ENCODE measurements at regions of chr1 and their contacts with region 1.

Region 1: DNA sequence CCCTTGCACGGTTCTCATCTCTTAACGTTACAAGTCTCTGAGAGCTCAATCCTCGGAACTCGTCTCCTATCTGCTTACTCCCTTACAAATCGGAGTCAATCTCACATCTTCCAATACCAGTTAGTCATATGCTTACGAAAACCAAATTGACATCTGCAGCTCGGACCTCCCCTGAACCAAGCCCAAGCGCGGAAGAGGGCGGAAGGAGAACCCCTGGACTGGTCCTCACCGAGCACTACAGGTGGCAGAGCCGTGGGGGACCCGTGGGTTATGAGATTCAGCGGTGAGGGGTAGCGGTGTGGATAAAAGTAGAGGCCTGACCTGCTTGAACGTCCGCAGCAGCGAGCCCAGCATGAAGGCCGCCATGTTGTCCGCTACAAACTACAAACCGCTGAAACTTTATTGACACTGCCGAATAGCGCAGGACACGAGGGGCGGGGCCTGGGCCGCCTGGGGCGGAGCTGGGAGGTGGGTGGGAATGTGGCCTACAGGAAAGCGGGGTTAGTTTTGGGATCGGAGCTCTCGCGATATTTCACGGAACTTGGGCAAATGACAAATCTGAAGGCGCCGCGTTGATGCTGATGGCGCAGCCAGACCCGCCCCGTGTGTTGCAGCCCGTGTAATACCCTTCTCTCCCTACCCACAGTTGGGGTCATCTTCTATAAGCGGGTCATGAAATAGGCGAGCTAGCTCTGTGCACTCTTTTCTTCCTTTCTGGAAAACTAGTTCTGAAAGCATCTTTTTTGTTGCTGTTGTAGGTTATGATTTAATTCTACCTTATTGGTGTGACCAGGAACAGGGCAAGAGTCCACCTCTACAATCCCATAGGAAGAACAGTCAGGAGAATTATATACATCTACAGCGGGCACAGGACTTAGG is at the start of gene MRPS14:
- DNase-seq: peak; percentile 97 to 100 (median 98)
- ATAC-seq: peak; percentile 97
- H3K4me3 ChIP-seq: peak within 1 kb of the TSS; percentile 79
- H3K27ac ChIP-seq: peak within 1 kb of the TSS; percentile 83
- H3K4me1 ChIP-seq: peaks cover 4 to 11% of the 10 kb centered on the region in 2 experiments; a peak in 4 of 5 replicates
- H3K27me3 ChIP-seq: no peaks in the 10 kb centered on the region
- CTCF ChIP-seq: no peak; a peak in 2 of 6 replicates
- EP300 ChIP-seq: no peak; the same call in none of the 2 replicates
- POLR2A ChIP-seq: peak; percentile 96
- RAD21 ChIP-seq: no peak
- polyA plus RNA-seq, gene MRPS14: 215 to 231 TPM

Region 2: DNA sequence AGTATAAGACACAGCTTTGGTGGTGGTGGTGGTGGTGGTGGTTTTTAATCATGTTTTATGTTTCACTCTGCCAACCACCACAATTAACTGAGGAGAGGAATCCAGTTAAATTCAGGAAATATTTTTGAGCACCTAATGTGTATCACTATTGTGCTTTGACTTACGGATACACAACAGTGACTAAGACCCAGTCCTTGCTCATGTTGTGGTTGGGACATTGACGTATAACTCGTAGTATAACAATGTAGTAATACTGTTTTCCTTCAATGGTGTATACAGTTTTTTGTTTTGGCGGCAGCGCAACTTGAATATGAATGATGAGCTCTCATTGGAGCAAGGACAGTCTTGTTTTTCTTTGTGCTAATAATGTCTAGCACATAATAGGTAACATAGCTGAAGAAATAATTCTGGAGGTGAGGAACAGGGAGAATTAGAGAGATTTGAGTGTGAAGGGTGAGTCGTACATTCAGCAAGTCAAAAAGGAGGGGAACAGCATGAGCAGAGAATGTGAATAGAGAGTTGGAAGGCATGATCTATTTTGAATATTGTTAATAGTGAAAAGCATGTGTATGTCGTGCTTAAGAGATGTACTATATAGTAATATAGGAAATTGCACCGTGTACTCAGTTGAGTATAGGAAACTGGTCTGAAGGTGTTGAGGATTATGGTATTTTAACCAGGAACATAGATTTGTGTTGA is 18.0 kb before region 1 on chr1:
- CTCF ChIA-PET with region 1: no interaction called
- POLR2A ChIA-PET with region 1: interaction called, 65 read pairs
- in situ Hi-C with region 1: no loop called
- intact Hi-C with region 1: loop called (anchors 1 kb)
- DNase-seq: no peak
- ATAC-seq: no peak
- H3K4me3 ChIP-seq: no peak overlapping the region
- H3K27ac ChIP-seq: 0 out of 3 replicates have a peak overlapping the region, but pooled peaks have one; percentile 6
- H3K4me1 ChIP-seq: peaks cover 5 to 8% of the 10 kb centered on the region in 2 experiments; a peak in 3 of 5 replicates
- H3K27me3 ChIP-seq: no peaks in the 10 kb centered on the region
- CTCF ChIP-seq: no peak
- EP300 ChIP-seq: no peak
- POLR2A ChIP-seq: no peak
- RAD21 ChIP-seq: no peak

Region 3: GRCh38 chr1:175124861-175125260 is 101.6 kb after region 1 on chr1:
- CTCF ChIA-PET with region 1: interaction called, 29 read pairs
- POLR2A ChIA-PET with region 1: interaction called, 5 read pairs
- in situ Hi-C with region 1: no loop called
- intact Hi-C with region 1: no loop called
- DNase-seq: no peak
- ATAC-seq: no peak
- H3K4me3 ChIP-seq: no peak overlapping the region
- H3K27ac ChIP-seq: no peak overlapping the region
- H3K4me1 ChIP-seq: no peaks in the 10 kb centered on the region; a peak in 1 of 5 replicates
- H3K27me3 ChIP-seq: peaks cover 15 to 29% of the 10 kb centered on the region in 2 experiments
- CTCF ChIP-seq: no peak
- EP300 ChIP-seq: no peak
- POLR2A ChIP-seq: no peak
- RAD21 ChIP-seq: no peak

Region 4: GRCh38 chr1:175174309-175175165 is 151.3 kb after region 1 on chr1:
- CTCF ChIA-PET with region 1: no interaction called
- POLR2A ChIA-PET with region 1: no interaction called
- in situ Hi-C with region 1: no loop called
- intact Hi-C with region 1: no loop called
- DNase-seq: no peak
- ATAC-seq: no peak
- H3K4me3 ChIP-seq: no peak overlapping the region
- H3K27ac ChIP-seq: no peak overlapping the region
- H3K4me1 ChIP-seq: peaks cover 9 to 20% of the 10 kb centered on the region in 2 experiments; a peak in 3 of 5 replicates
- H3K27me3 ChIP-seq: no peaks in the 10 kb centered on the region
- CTCF ChIP-seq: no peak
- EP300 ChIP-seq: no peak
- POLR2A ChIP-seq: no peak
- RAD21 ChIP-seq: no peak

Measured in K562 (cell line).